ENCODE measurements at regions of chr11 and their contacts with region 1.

Region 1: GRCh38 chr11:128157423-128158298 is 429.7 kb downstream of the ETS1 start:
- DNase-seq: peak; percentile 78
- H3K4me3 Mint-ChIP-seq: peak overlapping the region; percentile 33
- H3K27ac Mint-ChIP-seq: peak overlapping the region; percentile 42
- H3K4me1 Mint-ChIP-seq: no peaks in the 10 kb centered on the region
- H3K27me3 Mint-ChIP-seq: no peaks in the 10 kb centered on the region
- CTCF ChIP-seq: peak; percentile 88

Region 2: GRCh38 chr11:128026596-128026995 is 131.1 kb before region 1 on chr11:
- CTCF ChIA-PET with region 1: interaction called, 84 read pairs
- POLR2A ChIA-PET with region 1: interaction called, 4 read pairs
- intact Hi-C with region 1: loop called (anchors 1 kb)
- DNase-seq: peak; percentile 98
- H3K4me3 Mint-ChIP-seq: peak overlapping the region; percentile 30
- H3K27ac Mint-ChIP-seq: peak overlapping the region; percentile 28
- H3K4me1 Mint-ChIP-seq: peaks cover 42% of the 10 kb centered on the region
- H3K27me3 Mint-ChIP-seq: no peaks in the 10 kb centered on the region
- CTCF ChIP-seq: no peak

Region 3: DNA sequence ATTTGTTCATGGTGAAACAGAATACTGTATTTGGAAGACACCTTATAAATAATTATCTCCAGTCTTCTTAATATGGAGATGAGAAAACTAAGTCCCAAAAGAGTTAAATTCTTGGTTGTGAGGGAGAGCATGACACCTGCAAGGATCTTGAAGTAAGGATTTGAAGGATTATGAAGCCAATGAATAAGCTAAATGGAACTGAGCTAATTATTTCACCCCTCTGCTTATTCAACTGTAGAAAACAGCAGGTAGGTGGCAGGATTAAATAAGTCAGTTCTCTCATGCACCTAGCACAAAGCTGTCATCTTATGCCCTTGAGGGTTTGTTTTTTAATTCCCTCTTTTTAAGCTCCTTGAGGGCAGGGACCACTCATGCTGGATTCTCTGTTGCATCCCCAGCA is 27.6 kb before region 1 on chr11:
- CTCF ChIA-PET with region 1: interaction called, 15 read pairs
- POLR2A ChIA-PET with region 1: no interaction called
- intact Hi-C with region 1: no loop called
- DNase-seq: no peak
- H3K4me3 Mint-ChIP-seq: no peak overlapping the region
- H3K27ac Mint-ChIP-seq: no peak overlapping the region
- H3K4me1 Mint-ChIP-seq: peaks cover 7% of the 10 kb centered on the region
- H3K27me3 Mint-ChIP-seq: no peaks in the 10 kb centered on the region
- CTCF ChIP-seq: no peak

Region 4: DNA sequence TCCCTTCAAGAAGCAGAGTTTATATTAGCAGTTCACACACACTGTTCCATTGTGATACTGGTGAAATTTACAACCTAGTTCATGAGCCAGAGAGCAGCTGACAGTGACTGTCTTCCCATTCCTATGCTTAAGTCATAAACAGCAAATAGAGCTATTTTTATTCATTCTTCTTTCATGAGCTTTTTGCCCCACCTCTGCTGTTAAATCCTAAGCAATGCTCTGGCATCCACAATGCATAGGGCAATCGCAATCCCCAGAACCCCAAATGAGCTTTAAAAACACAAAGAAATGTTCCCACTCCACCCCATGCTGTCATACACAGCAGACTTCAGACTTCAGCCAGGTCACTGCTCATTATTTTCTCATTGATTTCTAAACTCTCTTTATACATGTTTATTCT is 122.2 kb after region 1 on chr11:
- CTCF ChIA-PET with region 1: interaction called, 17 read pairs
- POLR2A ChIA-PET with region 1: no interaction called
- intact Hi-C with region 1: no loop called
- DNase-seq: peak; percentile 30
- H3K4me3 Mint-ChIP-seq: no peak overlapping the region
- H3K27ac Mint-ChIP-seq: peak overlapping the region; percentile 27
- H3K4me1 Mint-ChIP-seq: peaks cover 10% of the 10 kb centered on the region
- H3K27me3 Mint-ChIP-seq: no peaks in the 10 kb centered on the region
- CTCF ChIP-seq: no peak

Region 5: GRCh38 chr11:128311742-128312719 is 154.4 kb after region 1 on chr11:
- CTCF ChIA-PET with region 1: no interaction called
- POLR2A ChIA-PET with region 1: no interaction called
- intact Hi-C with region 1: no loop called
- DNase-seq: no peak
- H3K4me3 Mint-ChIP-seq: no peak overlapping the region
- H3K27ac Mint-ChIP-seq: no peak overlapping the region
- H3K4me1 Mint-ChIP-seq: no peaks in the 10 kb centered on the region
- H3K27me3 Mint-ChIP-seq: no peaks in the 10 kb centered on the region
- CTCF ChIP-seq: no peak

Region 6: DNA sequence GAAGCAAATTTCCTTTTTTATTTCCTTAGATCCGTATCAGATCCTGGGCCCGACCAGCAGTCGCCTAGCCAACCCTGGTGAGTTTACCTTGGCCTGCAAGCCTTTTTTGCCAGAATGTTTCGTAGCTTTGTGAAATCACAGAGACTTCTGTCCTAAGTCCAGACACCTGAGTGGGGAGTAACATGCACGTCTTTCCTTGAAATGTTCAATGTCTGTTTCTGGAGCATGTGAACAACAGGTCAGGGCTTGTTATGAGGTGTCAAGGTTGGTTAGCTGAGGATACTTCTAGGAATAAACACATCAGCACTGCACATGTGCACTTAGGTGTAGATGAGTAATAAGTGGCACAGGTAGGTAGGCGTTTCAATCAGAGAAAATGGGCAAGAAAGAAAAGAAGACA is 651.5 kb after region 1 on chr11:
- CTCF ChIA-PET with region 1: interaction called, 11 read pairs
- POLR2A ChIA-PET with region 1: no interaction called
- intact Hi-C with region 1: no loop called
- DNase-seq: peak; percentile 81
- H3K4me3 Mint-ChIP-seq: no peak overlapping the region
- H3K27ac Mint-ChIP-seq: peak overlapping the region; percentile 39
- H3K4me1 Mint-ChIP-seq: peaks cover 7% of the 10 kb centered on the region
- H3K27me3 Mint-ChIP-seq: no peaks in the 10 kb centered on the region
- CTCF ChIP-seq: no peak

Measured in MCF 10A (cell line).